ENCODE measurements at regions of chr20 and their contacts with region 1.

Region 1: DNA sequence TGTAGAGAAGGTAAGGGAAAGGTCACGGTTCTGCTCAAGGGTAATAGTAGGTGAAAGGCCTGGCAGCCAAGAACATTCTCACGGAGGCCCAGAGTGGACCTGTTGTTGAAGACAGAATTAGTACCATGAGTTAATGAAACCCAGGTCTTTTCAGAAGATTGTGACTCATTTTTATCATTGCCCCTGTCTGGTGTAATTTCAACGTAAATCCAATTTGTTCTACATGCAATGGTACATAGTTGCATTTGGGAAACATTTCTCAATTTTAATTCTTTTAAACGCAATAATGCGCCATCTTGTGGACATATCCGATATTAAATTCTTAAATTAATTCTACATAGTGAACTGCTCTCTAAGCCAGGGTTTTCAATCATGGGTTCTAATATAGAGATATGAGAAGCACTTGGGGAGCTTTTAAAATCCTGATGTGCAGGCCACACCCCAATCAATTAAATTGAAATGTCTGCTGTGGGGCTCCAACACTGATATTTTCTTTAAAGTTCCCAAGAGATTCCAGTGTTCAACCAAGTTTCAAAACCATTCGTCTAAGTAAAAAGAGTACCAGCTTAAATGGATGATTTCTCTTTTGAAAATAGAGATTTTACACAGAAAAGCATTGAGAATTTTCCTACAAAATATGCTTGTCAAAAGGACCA is 257.4 kb downstream of the PLCB1 start:
- DNase-seq: peak; percentile 47
- H3K4me3 Mint-ChIP-seq: no peak overlapping the region
- H3K27ac Mint-ChIP-seq: no peak overlapping the region
- H3K4me1 Mint-ChIP-seq: peaks cover 12% of the 10 kb centered on the region
- H3K27me3 Mint-ChIP-seq: no peaks in the 10 kb centered on the region
- CTCF ChIP-seq: peak; percentile 35

Region 2: GRCh38 chr20:7935027-7935551 is 454.4 kb before region 1 on chr20:
- CTCF ChIA-PET with region 1: interaction called, 10 read pairs
- POLR2A ChIA-PET with region 1: no interaction called
- intact Hi-C with region 1: loop called (anchors 2 kb)
- DNase-seq: no peak
- H3K4me3 Mint-ChIP-seq: no peak overlapping the region
- H3K27ac Mint-ChIP-seq: no peak overlapping the region
- H3K4me1 Mint-ChIP-seq: no peaks in the 10 kb centered on the region
- H3K27me3 Mint-ChIP-seq: no peaks in the 10 kb centered on the region
- CTCF ChIP-seq: no peak

Region 3: GRCh38 chr20:8131598-8132483 is 257.7 kb before region 1 on chr20 and contains the start of gene PLCB1:
- CTCF ChIA-PET with region 1: interaction called, 33 read pairs
- POLR2A ChIA-PET with region 1: interaction called, 3 read pairs
- intact Hi-C with region 1: loop called (anchors 1 kb)
- DNase-seq: peak; percentile 79
- H3K4me3 Mint-ChIP-seq: peak within 1 kb of the TSS; percentile 75
- H3K27ac Mint-ChIP-seq: peak within 1 kb of the TSS; percentile 43
- H3K4me1 Mint-ChIP-seq: peaks cover 8% of the 10 kb centered on the region
- H3K27me3 Mint-ChIP-seq: peaks cover 15% of the 10 kb centered on the region
- CTCF ChIP-seq: peak; percentile 95
- total RNA-seq, gene PLCB1: 5.9 and 8.2 TPM in 2 replicates

Region 4: DNA sequence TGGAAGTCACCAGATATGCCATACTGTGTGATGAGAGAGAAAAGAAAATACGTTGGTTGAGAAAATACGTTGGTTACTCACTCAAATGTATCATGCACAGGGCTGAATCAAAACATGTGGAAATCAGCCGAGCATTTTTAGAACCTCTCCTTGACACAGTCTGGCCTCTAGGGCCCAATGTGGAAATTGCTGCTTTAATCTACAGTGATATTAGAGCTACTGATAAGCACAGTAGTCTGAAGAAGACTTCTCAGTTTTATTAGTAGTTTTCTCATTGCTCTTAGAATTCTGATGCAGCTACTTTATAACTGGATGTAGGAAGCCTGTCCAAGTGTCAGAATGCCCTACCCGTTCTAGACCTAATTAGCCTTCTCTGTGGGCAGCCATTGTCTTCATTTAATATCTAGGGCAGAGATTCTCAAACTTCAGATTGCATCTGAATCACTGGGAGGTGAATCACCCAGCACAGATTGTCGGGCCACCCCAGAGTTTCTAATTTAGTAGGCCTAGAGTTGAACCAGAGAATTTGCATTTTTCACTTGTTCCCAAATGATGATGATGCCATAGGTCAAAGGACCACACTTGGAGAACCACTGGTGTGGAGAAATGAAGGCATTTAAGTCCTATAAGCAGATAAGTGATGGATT is 28.4 kb before region 1 on chr20:
- CTCF ChIA-PET with region 1: interaction called, 19 read pairs
- POLR2A ChIA-PET with region 1: interaction called, 4 read pairs
- intact Hi-C with region 1: no loop called
- DNase-seq: peak; percentile 23
- H3K4me3 Mint-ChIP-seq: no peak overlapping the region
- H3K27ac Mint-ChIP-seq: no peak overlapping the region
- H3K4me1 Mint-ChIP-seq: no peaks in the 10 kb centered on the region
- H3K27me3 Mint-ChIP-seq: no peaks in the 10 kb centered on the region
- CTCF ChIP-seq: no peak

Region 5: DNA sequence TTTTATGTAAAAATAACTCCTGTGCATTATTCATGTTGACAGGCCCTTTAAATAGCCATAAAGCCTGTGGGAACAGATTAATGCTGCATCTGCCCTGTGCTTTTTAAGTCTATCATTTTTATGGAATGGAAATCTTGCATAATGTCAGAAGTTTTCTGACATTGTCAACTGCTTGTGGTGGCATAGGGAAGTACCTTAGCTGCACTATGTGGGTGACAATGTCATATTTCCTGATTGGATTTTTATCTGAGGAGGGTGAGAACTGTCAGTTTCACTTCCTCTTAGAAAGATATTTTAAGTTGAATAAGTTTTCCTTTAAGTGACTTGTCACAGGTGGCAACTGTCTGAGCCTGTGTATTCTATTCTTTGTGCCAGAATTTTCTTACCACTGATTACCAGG is 10.4 kb after region 1 on chr20:
- CTCF ChIA-PET with region 1: interaction called, 59 read pairs
- POLR2A ChIA-PET with region 1: no interaction called
- intact Hi-C with region 1: no loop called
- DNase-seq: no peak
- H3K4me3 Mint-ChIP-seq: no peak overlapping the region
- H3K27ac Mint-ChIP-seq: no peak overlapping the region
- H3K4me1 Mint-ChIP-seq: no peaks in the 10 kb centered on the region
- H3K27me3 Mint-ChIP-seq: no peaks in the 10 kb centered on the region
- CTCF ChIP-seq: no peak

Region 6: DNA sequence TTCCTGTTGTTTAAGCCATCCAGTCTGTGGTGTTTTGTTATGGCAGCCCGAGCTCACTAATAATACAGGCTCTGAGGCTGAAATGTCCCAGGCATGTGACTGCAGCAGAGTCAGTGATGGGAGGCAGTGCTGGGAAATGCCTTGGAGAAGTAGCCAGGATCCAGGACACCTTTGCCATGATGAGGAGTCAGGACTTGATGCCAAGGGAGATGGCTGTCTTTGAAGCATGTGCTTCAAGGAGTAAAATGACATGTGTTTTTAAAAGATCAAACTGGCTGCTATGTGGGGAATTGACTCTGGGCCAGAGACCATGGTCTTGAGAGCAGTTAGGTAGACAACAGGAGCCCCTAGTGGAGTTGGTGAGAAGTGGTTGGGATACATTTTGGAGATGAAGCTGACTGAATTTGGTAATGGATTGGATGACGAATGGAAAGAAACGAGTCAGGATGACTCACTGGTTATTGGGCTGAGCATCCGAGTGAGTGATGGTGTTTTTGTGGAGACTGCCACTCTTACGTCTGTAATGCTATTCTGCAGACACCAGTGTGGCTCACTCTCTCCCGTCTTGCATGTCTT is 64.7 kb after region 1 on chr20:
- CTCF ChIA-PET with region 1: no interaction called
- POLR2A ChIA-PET with region 1: no interaction called
- intact Hi-C with region 1: loop called (anchors 1 kb)
- DNase-seq: peak; percentile 85
- H3K4me3 Mint-ChIP-seq: no peak overlapping the region
- H3K27ac Mint-ChIP-seq: no peak overlapping the region
- H3K4me1 Mint-ChIP-seq: peaks cover 9% of the 10 kb centered on the region
- H3K27me3 Mint-ChIP-seq: no peaks in the 10 kb centered on the region
- CTCF ChIP-seq: peak; percentile 33

Region 7: DNA sequence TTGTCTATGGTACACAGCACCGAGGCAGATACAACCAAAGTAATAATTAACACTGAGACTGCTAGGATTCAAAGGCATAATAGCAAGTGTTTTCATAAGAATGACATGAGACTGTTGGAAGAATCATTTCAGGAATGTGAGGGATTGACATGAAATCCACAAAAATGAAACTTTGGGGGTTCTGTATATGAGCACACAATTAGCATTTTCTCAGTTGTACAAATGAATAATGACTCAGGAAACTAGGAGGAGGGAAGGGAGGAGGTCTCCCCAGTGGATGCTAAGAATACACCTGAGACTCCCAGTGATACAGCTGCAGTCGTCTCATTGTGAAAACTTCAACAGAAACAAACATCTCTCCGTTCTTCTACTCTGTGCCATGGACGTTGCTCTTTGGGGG is 251.0 kb after region 1 on chr20:
- CTCF ChIA-PET with region 1: no interaction called
- POLR2A ChIA-PET with region 1: no interaction called
- intact Hi-C with region 1: no loop called
- DNase-seq: no peak
- H3K4me3 Mint-ChIP-seq: no peak overlapping the region
- H3K27ac Mint-ChIP-seq: no peak overlapping the region
- H3K4me1 Mint-ChIP-seq: peaks cover 19% of the 10 kb centered on the region
- H3K27me3 Mint-ChIP-seq: no peaks in the 10 kb centered on the region
- CTCF ChIP-seq: no peak